Ascending aorta (tissue), 2 donors: ENCODE measurements at regions of chr17 and their contacts with region 1.

Region 1: GRCh38 chr17:2011411-2012371 is 13.4 kb downstream of the RTN4RL1 start:
- DNase-seq: peak in 1 of 2 donors; percentile 75
- H3K4me3 ChIP-seq: peak overlapping the region in 1 of 2 donors; percentile 6
- H3K27ac ChIP-seq: peak overlapping the region; percentile 70 to 80
- H3K4me1 ChIP-seq: peaks cover 4 to 34% of the 10 kb centered on the region in 2 donors
- H3K27me3 ChIP-seq: no peaks in the 10 kb centered on the region
- CTCF ChIP-seq: no peak

Region 2: GRCh38 chr17:1999557-2000251 is 12.0 kb before region 1 on chr17:
- intact Hi-C with region 1: loop called (anchors 2 kb)
- DNase-seq: no peak
- H3K4me3 ChIP-seq: peak overlapping the region in 1 of 2 donors; percentile 22
- H3K27ac ChIP-seq: peak overlapping the region; percentile 80 to 81
- H3K4me1 ChIP-seq: peaks cover 20 to 22% of the 10 kb centered on the region in 2 donors
- H3K27me3 ChIP-seq: no peaks in the 10 kb centered on the region
- CTCF ChIP-seq: no peak